PC-9 (cell line): ENCODE measurements at regions of chr1 and their contacts with region 1.

Region 1: GRCh38 chr1:155193275-155193990 is 14.3 kb downstream of the THBS3 start:
- DNase-seq: peak; percentile 79 to 96
- H3K4me3 ChIP-seq: peak overlapping the region; percentile 73
- H3K27ac ChIP-seq: peak overlapping the region; percentile 59
- H3K4me1 ChIP-seq: peaks cover 14% of the 10 kb centered on the region
- H3K27me3 ChIP-seq: no peaks in the 10 kb centered on the region
- CTCF ChIP-seq: peak; percentile 97

Region 2: GRCh38 chr1:155172732-155173477 is 20.5 kb before region 1 on chr1 and contains the start of gene KRTCAP2:
- CTCF ChIA-PET with region 1: interaction called, 15 read pairs
- POLR2A ChIA-PET with region 1: interaction called, 26 read pairs
- intact Hi-C with region 1: loop called (anchors 2 kb)
- DNase-seq: peak; percentile 89 to 93
- H3K4me3 ChIP-seq: peak within 1 kb of the TSS; percentile 89
- H3K27ac ChIP-seq: peak within 1 kb of the TSS; percentile 59
- H3K4me1 ChIP-seq: peaks cover 30% of the 10 kb centered on the region
- H3K27me3 ChIP-seq: no peaks in the 10 kb centered on the region
- CTCF ChIP-seq: peak; percentile 94
- total RNA-seq, gene KRTCAP2: 112 and 156 TPM in 2 replicates

Region 3: GRCh38 chr1:155208541-155209311 is 15.3 kb after region 1 on chr1 and contains the start of gene MTX1:
- CTCF ChIA-PET with region 1: interaction called, 19 read pairs
- POLR2A ChIA-PET with region 1: interaction called, 4 read pairs
- intact Hi-C with region 1: no loop called
- DNase-seq: peak; percentile 60 to 85
- H3K4me3 ChIP-seq: peak within 1 kb of the TSS; percentile 78
- H3K27ac ChIP-seq: peak within 1 kb of the TSS; percentile 74
- H3K4me1 ChIP-seq: peaks cover 26% of the 10 kb centered on the region
- H3K27me3 ChIP-seq: no peaks in the 10 kb centered on the region
- CTCF ChIP-seq: no peak
- total RNA-seq, gene MTX1: 56.1 and 68.9 TPM in 2 replicates

Region 4: DNA sequence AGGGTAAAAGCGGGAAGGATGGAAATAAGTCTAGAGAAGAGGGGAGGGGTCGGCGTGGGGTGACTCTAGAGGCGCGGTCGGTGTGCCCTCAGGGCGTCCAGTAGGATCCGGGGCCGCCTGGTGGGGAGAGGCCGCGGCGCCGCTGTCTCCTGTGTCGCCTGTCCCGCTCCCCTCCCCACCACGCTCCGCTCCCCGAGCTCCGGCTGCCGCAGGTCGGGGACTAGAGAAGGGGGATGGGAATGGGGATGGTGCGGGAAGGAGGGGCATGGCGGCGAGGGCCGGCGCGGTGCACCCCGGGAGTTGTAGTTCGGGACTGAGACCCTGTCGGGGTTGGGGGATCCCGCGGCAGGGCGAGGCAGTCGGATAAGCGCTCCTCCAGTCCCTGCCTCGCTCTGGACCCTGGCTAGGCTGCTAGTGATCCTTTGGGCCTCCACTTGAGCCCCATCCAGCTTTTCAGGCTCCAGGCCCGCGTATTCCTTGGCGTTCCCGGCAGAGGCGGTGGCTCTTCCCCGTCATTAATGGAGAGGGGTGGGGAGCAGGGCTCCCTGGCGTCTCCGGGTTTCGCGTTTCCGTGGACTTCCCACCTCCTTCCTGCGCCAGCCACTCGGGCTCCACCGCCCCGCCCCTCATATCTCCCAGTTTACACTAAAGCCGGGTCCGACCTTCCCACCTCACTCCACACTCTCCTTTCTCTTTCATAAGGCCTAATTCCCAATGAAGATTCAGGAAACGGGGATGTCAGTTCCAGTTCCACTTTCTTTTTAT is 62.0 kb after region 1 on chr1 and contains the start of gene ENTREP3:
- CTCF ChIA-PET with region 1: no interaction called
- POLR2A ChIA-PET with region 1: no interaction called
- intact Hi-C with region 1: no loop called
- DNase-seq: peak; percentile 52 to 76
- H3K4me3 ChIP-seq: peak within 1 kb of the TSS; percentile 81
- H3K27ac ChIP-seq: no peak within 1 kb of the TSS
- H3K4me1 ChIP-seq: peaks cover 15% of the 10 kb centered on the region
- H3K27me3 ChIP-seq: no peaks in the 10 kb centered on the region
- CTCF ChIP-seq: no peak
- total RNA-seq, gene ENTREP3: 56.9 and 60.8 TPM in 2 replicates